CD14-positive monocyte (primary cell): ENCODE measurements at regions of chr11 and their contacts with region 1.

Region 1: GRCh38 chr11:116772443-116773202 is at the start of gene BUD13:
- DNase-seq: peak; percentile 78 to 81 (median 79)
- H3K4me3 ChIP-seq: peak within 1 kb of the TSS; percentile 86 to 98 (median 93)
- H3K4me3 Mint-ChIP-seq: peak within 1 kb of the TSS; percentile 92 to 97
- H3K27ac ChIP-seq: peak within 1 kb of the TSS; percentile 71 to 91
- H3K27ac Mint-ChIP-seq: peak within 1 kb of the TSS; percentile 93 to 98 (median 95)
- H3K4me1 ChIP-seq: peaks cover 36 to 49% of the 10 kb centered on the region in 2 donors
- H3K4me1 Mint-ChIP-seq: peaks cover 41% of the 10 kb centered on the region
- H3K27me3 ChIP-seq: no peaks in the 10 kb centered on the region
- H3K27me3 Mint-ChIP-seq: peaks cover 0 to 5% (median 0%) of the 10 kb centered on the region in 3 donors
- CTCF ChIP-seq: no peak
- polyA plus RNA-seq, gene BUD13: 4.2 to 8.7 (median 5.3) TPM

Region 2: GRCh38 chr11:116901211-116901610 is 128.6 kb after region 1 on chr11:
- intact Hi-C with region 1: no loop called
- DNase-seq: no peak
- H3K4me3 ChIP-seq: no peak overlapping the region
- H3K4me3 Mint-ChIP-seq: no peak overlapping the region
- H3K27ac ChIP-seq: no peak overlapping the region
- H3K27ac Mint-ChIP-seq: no peak overlapping the region
- H3K4me1 ChIP-seq: peaks cover 6 to 11% of the 10 kb centered on the region in 2 donors
- H3K4me1 Mint-ChIP-seq: peaks cover 17% of the 10 kb centered on the region
- H3K27me3 ChIP-seq: no peaks in the 10 kb centered on the region
- H3K27me3 Mint-ChIP-seq: no peaks in the 10 kb centered on the region
- CTCF ChIP-seq: no peak

Region 3: GRCh38 chr11:117232092-117232878 is 459.7 kb after region 1 on chr11 and contains the start of gene RNF214:
- intact Hi-C with region 1: loop called in 1 of 2 experiments (anchors 5 kb)
- DNase-seq: peak; percentile 62 to 74 (median 71)
- H3K4me3 ChIP-seq: peak within 1 kb of the TSS; percentile 96 to 99 (median 97)
- H3K4me3 Mint-ChIP-seq: peak within 1 kb of the TSS; percentile 98 to 100
- H3K27ac ChIP-seq: peak within 1 kb of the TSS; percentile 81 to 89
- H3K27ac Mint-ChIP-seq: peak within 1 kb of the TSS; percentile 93 to 99 (median 98)
- H3K4me1 ChIP-seq: peaks cover 21 to 26% of the 10 kb centered on the region in 2 donors
- H3K4me1 Mint-ChIP-seq: peaks cover 34% of the 10 kb centered on the region
- H3K27me3 ChIP-seq: no peaks in the 10 kb centered on the region
- H3K27me3 Mint-ChIP-seq: peaks cover 0 to 2% (median 0%) of the 10 kb centered on the region in 3 donors
- CTCF ChIP-seq: peak; percentile 99
- polyA plus RNA-seq, gene RNF214: 6.4 to 13.8 (median 7.8) TPM